ENCODE measurements at regions of chr5 and their contacts with region 1.

Region 1: GRCh38 chr5:14871210-14872069 is at the start of gene ANKH:
- DNase-seq: peak; percentile 21 to 89 (median 78)

Region 2: GRCh38 chr5:14212838-14213237 is 658.6 kb before region 1 on chr5:
- intact Hi-C with region 1: no loop called
- DNase-seq: no peak

Region 3: DNA sequence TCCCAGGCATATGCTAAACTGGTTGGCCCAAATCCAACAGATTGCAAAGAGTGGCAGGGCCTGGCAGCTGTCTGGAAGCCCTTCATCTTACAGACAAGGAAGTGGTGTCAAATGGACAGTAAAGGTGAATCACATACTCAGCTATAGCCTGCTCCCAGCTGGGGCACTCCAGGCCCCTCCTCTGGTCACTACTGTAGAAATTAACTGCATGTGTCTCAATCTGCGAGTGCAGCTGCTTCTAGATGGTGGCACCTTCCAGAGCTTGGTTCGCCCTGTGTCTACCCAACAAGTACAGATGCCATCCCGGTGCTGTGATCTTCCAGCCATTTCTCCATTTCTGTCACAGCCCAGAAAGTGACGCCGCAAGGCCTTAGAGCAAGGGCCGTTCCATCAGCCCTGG is 156.7 kb before region 1 on chr5:
- intact Hi-C with region 1: no loop called
- DNase-seq: peak in 3 of 42 donors; percentile 11 to 38 (median 24)

Region 4: DNA sequence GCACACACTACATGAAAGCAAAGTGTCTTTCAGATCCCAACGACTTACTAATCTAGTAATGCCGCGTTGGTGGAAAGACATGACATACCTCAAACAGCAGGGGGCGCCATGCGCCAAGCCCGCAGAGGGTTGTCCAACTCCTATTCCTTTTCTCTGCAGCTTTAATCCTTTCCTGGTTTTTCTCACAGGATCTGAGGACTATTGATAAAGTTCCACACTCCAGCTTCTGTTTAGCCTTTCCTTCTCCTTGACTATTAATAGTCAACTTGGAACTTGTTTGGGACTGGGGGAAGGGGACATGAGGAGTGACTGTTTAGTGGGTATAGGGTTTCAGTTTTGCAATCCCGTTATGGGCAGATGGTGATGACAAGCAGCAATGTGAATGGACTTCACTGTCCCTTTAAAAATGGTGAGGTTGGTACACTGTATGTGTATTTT is 144.0 kb before region 1 on chr5:
- intact Hi-C with region 1: loop called (anchors 2 kb)
- DNase-seq: peak; percentile 68 to 96 (median 91)

Region 5: DNA sequence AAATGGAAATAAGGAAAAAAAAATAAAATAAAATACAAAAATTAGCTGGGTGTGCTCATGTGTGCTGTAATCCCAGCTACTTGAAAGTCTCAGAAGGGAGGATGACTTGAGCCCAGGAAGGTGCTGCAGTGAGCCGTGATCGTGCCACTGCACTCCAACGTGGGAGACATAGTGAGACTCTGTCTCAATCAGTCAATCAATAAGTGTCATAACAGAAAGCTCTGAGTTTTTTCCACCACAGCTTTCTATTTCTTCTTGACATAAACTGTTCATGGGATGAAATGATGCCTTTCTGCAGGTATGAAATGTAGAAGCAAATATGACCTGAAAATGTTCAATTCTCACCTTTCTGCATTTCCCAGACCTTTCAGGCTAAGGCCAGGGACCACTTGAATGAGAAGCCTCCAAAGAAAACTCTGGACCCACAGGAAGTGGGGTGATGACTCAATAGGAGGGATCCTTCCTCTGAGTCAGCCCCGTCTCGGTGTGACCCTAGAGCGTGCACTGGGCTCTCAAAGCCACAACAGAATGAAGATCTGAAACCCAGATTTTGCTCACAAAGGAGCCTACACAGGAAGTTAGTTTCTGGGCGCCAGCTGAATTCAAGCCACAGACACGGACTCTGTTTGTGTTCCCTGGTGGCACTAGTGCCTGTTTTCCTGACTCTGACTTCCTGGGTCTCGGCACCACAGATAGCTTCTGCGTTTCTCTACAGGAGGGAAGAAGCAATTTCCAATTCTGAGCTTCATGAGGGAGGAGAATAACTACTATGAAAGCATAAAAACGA is 61.9 kb before region 1 on chr5:
- intact Hi-C with region 1: loop called (anchors 10 kb)
- DNase-seq: peak; percentile 13 to 83 (median 58)

Region 6: GRCh38 chr5:15003511-15003920 is 132.1 kb after region 1 on chr5:
- intact Hi-C with region 1: loop called (anchors 10 kb)
- DNase-seq: peak; percentile 32 to 88 (median 73)

Measured in head of caudate nucleus (tissue), 42 donors.